Activated B cell treated with CpG ODN at 0.5 μM for 24 hours (primary cell): ENCODE measurements at regions of chr1 and their contacts with region 1.

Region 1: DNA sequence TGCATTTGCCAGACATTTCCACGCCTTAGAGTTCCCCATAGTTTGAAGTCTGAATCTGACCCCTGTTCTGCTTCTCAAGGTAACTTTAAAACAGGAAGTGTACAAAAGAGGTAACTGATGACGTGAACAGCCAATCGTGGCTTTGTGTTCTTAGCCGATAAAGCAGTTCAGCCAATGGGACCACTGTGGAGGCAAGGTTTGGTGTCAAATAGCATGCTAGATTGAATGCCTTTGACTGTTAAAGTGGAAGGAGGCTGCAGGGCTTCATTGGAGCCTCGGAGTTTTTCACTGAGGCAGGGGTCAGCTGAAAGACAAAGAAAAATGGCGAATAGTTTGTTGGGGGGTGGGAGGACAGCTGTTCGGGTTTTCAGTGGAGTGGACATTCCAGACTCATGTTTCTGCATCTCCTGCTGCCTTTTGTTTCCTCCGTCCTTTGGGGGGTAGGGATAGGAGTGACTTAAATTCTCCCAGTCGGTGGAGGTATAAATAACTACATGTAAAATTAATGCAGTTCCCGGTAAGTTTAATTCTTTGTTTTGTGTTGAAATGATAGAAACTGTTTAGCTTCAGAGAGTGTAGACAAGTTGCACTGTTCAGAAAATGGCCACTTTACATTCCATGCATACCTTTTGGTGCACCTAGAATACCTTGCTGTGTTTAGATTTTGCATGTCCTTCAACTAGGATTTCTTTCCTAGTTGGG is 17.7 kb downstream of the NFYC start:
- DNase-seq: peak; percentile 30
- ATAC-seq: peak; percentile 89
- H3K4me3 Mint-ChIP-seq: peak overlapping the region; percentile 95
- H3K27ac Mint-ChIP-seq: peak overlapping the region; percentile 95
- H3K4me1 Mint-ChIP-seq: peaks cover 75% of the 10 kb centered on the region
- H3K27me3 Mint-ChIP-seq: no peaks in the 10 kb centered on the region
- CTCF ChIP-seq: no peak

Region 2: GRCh38 chr1:39754906-39755504 is 954.2 kb before region 1 on chr1:
- CTCF ChIA-PET with region 1: no interaction called
- POLR2A ChIA-PET with region 1: no interaction called
- intact Hi-C with region 1: no loop called
- DNase-seq: no peak
- ATAC-seq: no peak
- H3K4me3 Mint-ChIP-seq: no peak overlapping the region
- H3K27ac Mint-ChIP-seq: no peak overlapping the region
- H3K4me1 Mint-ChIP-seq: no peaks in the 10 kb centered on the region
- H3K27me3 Mint-ChIP-seq: no peaks in the 10 kb centered on the region
- CTCF ChIP-seq: no peak

Region 3: GRCh38 chr1:40732756-40733301 is 23.6 kb after region 1 on chr1:
- CTCF ChIA-PET with region 1: no interaction called
- POLR2A ChIA-PET with region 1: interaction called, 11 read pairs
- intact Hi-C with region 1: no loop called
- DNase-seq: no peak
- ATAC-seq: no peak
- H3K4me3 Mint-ChIP-seq: no peak overlapping the region
- H3K27ac Mint-ChIP-seq: no peak overlapping the region
- H3K4me1 Mint-ChIP-seq: peaks cover 45% of the 10 kb centered on the region
- H3K27me3 Mint-ChIP-seq: no peaks in the 10 kb centered on the region
- CTCF ChIP-seq: no peak

Region 4: GRCh38 chr1:40802078-40802741 is 93.0 kb after region 1 on chr1:
- CTCF ChIA-PET with region 1: no interaction called
- POLR2A ChIA-PET with region 1: interaction called, 6 read pairs
- intact Hi-C with region 1: loop called (anchors 2 kb)
- DNase-seq: peak; percentile 75
- ATAC-seq: peak; percentile 96
- H3K4me3 Mint-ChIP-seq: peak overlapping the region; percentile 77
- H3K27ac Mint-ChIP-seq: peak overlapping the region; percentile 68
- H3K4me1 Mint-ChIP-seq: peaks cover 33% of the 10 kb centered on the region
- H3K27me3 Mint-ChIP-seq: no peaks in the 10 kb centered on the region
- CTCF ChIP-seq: no peak